Esophagus muscularis mucosa (tissue), 4 donors: ENCODE measurements at regions of chr14 and their contacts with region 1.

Region 1: DNA sequence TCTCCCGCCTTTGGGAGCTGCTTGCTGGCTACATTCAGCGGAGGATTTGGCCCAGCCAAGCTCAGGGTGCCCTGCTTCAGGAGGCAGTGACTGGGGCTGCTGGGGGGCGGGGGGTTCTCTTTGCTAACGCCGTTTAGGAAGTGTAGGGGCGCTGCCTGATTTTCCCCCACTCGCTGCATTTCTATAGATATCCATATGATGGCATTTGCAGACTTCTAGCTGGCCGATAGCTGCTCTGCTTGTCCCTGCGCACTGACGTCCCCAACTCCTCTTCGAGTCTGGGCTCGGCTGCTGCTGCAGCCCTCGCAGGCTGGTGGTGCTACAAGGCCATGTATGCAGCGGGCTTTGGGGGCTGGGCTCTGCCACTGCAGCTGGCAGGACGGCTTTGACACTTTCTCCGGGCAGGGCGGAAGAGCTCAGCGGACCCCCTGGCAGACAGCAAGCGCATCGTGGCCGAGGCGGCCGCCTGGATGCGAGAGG is 3.1 kb downstream of the LRFN5 start:
- DNase-seq: no peak
- H3K4me3 ChIP-seq: peak overlapping the region; percentile 62 to 71 (median 68)
- H3K27ac ChIP-seq: peak overlapping the region; percentile 38 to 86 (median 82)
- H3K4me1 ChIP-seq: peaks cover 14 to 49% (median 38%) of the 10 kb centered on the region in 4 donors
- H3K27me3 ChIP-seq: peaks cover 0 to 65% (median 11%) of the 10 kb centered on the region in 4 donors
- CTCF ChIP-seq: peak; percentile 23 to 33 (median 33)
- EP300 ChIP-seq: no peak
- POLR2A ChIP-seq: no peak

Region 2: DNA sequence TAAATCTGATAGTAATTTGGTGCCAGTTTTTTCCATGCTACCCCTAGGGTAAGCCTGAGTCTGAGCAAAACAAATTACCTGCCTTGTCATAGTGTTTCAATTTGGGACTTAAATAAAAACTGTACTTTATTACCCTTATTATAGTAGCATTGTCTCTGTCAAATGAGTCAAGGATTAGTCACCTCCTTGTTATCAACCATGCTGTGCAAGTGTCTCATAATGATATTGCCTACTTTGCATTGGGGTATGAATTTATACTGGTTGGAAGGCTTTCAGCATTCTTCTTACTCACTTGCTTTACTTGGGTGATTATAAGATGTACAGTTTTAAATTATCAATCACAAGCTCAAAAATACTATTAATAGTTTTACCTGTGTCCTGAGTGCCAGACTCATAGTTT is 377.0 kb after region 1 on chr14:
- intact Hi-C with region 1: no loop called
- DNase-seq: no peak
- H3K4me3 ChIP-seq: no peak overlapping the region
- H3K27ac ChIP-seq: no peak overlapping the region
- H3K4me1 ChIP-seq: no peaks in the 10 kb centered on the region
- H3K27me3 ChIP-seq: no peaks in the 10 kb centered on the region
- CTCF ChIP-seq: no peak
- EP300 ChIP-seq: no peak
- POLR2A ChIP-seq: no peak

Region 3: DNA sequence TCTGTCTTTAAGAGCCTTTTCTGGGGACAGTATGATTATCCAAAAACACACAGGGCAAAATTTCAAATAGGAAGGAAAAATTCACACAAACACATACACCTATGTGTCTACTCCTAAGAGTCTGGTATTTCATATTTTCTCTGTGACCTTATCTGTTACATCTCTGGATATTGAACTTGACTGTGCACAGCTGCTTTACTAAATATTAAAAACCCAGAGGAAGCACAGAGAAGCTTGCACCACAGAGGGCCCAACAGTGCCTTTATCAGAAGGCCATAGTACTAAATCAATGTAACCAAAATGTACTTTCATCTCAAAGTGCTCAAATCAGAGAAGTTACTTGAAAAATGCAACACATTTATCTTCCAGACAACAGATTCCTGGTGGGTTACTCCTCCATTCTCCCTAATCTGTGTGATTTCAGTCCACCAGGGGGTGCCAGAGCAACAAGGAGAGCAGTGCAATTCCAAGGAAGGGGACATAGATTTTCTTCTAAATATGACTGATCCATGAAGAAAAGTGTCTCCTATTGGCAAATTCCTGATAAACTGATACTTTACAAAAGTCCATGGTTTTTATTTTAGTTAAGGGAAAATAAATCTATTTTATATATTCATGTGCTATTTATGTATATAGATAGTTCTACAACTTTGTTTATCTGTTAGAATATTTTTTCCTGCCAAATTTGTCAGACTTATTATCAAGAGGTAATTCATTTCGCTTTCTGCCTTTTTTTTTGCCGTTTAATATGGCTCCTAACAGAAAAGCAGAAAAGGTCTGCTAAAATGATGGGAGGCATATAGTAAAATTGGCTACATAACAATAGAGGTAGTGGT is 614.5 kb after region 1 on chr14:
- intact Hi-C with region 1: loop called (anchors 10 kb)
- DNase-seq: no peak
- H3K4me3 ChIP-seq: no peak overlapping the region
- H3K27ac ChIP-seq: no peak overlapping the region
- H3K4me1 ChIP-seq: peaks cover 0 to 9% (median 3%) of the 10 kb centered on the region in 4 donors
- H3K27me3 ChIP-seq: no peaks in the 10 kb centered on the region
- CTCF ChIP-seq: peak; percentile 38 to 68 (median 67)
- EP300 ChIP-seq: no peak
- POLR2A ChIP-seq: no peak